CD4-positive, alpha-beta memory T cell (primary cell): ENCODE measurements at regions of chr7 and their contacts with region 1.

Region 1: DNA sequence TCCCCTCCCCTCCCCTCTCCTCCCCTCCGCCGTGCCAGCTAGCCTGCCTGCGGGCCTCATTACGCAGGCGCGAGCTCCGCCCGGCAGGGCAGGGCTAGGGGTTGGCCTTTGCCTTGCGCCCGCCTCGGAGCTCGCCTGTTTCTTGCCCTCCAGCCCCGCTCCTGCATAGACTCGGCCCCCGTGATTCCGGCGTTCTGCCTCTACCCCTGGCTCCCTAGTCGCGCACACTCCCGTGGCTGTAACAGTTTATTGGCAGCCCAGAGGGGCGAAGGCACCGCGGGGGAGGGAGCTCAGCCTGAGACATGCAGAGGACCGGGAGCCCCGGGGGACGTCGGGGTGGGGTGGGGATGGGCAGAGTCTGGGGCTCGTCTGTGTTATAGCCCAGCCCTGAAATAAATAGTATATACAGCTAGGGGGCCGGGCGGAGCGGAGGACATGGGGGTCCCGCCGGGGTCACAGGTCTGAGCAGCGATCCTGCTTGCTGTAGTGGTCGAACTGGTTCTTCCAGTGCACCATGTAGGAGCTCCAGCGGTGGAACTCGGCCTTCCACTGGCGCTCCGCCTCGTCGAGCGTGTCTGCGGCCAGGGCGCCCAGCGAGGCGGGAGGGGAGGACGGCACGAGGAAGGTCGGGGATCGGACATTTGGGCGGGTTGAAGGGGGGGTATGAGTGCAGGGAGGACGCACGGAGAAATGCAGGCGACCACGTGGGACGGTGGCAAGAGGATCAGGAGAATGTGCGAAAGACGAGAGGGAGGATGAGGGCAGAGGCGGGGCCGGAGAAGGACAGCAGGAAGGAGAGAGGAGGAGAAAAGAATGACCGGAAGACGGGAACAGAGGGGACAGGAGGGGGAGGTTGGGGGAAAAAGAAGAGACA is 483 bp upstream of the UFSP1 start:
- DNase-seq: peak; percentile 90 to 93 (median 91)
- H3K4me3 ChIP-seq: peak overlapping the region; percentile 61 to 70
- H3K4me3 Mint-ChIP-seq: peak overlapping the region; percentile 84 to 95 (median 88)
- H3K27ac ChIP-seq: peak overlapping the region; percentile 39
- H3K27ac Mint-ChIP-seq: peak overlapping the region in 6 of 7 donors; percentile 22 to 93 (median 78)
- H3K4me1 ChIP-seq: peaks cover 50% of the 10 kb centered on the region
- H3K4me1 Mint-ChIP-seq: peaks cover 28 to 64% (median 40%) of the 10 kb centered on the region in 4 donors
- H3K27me3 ChIP-seq: peaks cover 2% of the 10 kb centered on the region
- H3K27me3 Mint-ChIP-seq: peaks cover 12 to 18% of the 10 kb centered on the region in 2 donors

Region 2: GRCh38 chr7:100837099-100837836 is 52.7 kb before region 1 on chr7:
- CTCF ChIA-PET with region 1: no interaction called
- POLR2A ChIA-PET with region 1: interaction called, 3 read pairs
- intact Hi-C with region 1: loop called (anchors 5 kb)
- DNase-seq: peak; percentile 57 to 71 (median 65)
- H3K4me3 ChIP-seq: peak overlapping the region in 1 of 2 donors; percentile 51
- H3K4me3 Mint-ChIP-seq: peak overlapping the region; percentile 75 to 90 (median 85)
- H3K27ac ChIP-seq: peak overlapping the region; percentile 37
- H3K27ac Mint-ChIP-seq: peak overlapping the region; percentile 64 to 92 (median 88)
- H3K4me1 ChIP-seq: peaks cover 9% of the 10 kb centered on the region
- H3K4me1 Mint-ChIP-seq: peaks cover 2 to 21% (median 7%) of the 10 kb centered on the region in 4 donors
- H3K27me3 ChIP-seq: no peaks in the 10 kb centered on the region
- H3K27me3 Mint-ChIP-seq: peaks cover 0 to 2% of the 10 kb centered on the region in 2 donors

Region 3: DNA sequence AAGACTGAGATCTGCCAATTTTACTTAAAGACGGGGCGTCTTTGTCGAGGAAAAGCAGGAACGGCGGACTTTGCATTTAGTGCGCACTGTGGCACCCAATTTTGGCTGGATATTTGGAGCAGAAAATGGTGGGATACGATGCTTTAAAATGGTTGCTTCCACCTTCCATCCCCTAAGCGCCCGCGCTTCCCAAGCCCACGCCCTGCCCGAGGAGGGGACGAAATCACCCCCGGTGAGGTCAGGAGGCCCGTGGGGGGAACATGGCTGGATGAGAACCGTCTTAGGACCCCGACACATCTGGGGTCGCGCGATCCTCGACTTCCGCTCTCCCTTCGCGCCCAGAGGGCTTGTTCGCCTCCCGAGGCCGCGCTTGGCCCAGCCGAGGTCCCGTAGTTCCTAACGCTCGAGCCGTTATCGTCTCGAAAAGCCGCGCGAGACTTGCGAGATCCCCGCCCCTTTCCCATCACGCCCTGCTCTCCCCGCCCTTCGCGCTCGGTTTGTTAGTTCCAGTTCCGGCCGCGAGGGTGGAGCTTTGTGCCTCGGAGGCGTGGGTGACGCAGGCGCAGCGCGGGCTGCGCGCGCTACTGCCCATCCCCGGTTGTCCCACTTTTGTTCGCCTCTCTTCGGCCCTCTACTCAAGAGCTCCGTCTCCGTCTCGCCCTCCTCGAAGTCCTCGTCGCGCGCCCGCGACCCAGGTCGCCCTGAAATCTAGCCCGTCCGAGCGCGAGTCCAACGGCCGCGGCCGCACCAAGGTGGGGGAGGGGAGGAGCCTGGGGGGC is 15.2 kb before region 1 on chr7 and contains the start of gene SRRT:
- CTCF ChIA-PET with region 1: interaction called, 6 read pairs
- POLR2A ChIA-PET with region 1: interaction called, 243 read pairs
- intact Hi-C with region 1: loop called (anchors 1 kb)
- DNase-seq: peak; percentile 98
- H3K4me3 ChIP-seq: peak within 1 kb of the TSS; percentile 92 to 99
- H3K4me3 Mint-ChIP-seq: peak within 1 kb of the TSS; percentile 98 to 99 (median 99)
- H3K27ac ChIP-seq: peak within 1 kb of the TSS; percentile 91
- H3K27ac Mint-ChIP-seq: peak within 1 kb of the TSS; percentile 96 to 99 (median 98)
- H3K4me1 ChIP-seq: peaks cover 49% of the 10 kb centered on the region
- H3K4me1 Mint-ChIP-seq: peaks cover 26 to 61% (median 47%) of the 10 kb centered on the region in 4 donors
- H3K27me3 ChIP-seq: no peaks in the 10 kb centered on the region
- H3K27me3 Mint-ChIP-seq: no peaks in the 10 kb centered on the region
- total RNA-seq, gene SRRT: 264 to 272 TPM

Region 4: DNA sequence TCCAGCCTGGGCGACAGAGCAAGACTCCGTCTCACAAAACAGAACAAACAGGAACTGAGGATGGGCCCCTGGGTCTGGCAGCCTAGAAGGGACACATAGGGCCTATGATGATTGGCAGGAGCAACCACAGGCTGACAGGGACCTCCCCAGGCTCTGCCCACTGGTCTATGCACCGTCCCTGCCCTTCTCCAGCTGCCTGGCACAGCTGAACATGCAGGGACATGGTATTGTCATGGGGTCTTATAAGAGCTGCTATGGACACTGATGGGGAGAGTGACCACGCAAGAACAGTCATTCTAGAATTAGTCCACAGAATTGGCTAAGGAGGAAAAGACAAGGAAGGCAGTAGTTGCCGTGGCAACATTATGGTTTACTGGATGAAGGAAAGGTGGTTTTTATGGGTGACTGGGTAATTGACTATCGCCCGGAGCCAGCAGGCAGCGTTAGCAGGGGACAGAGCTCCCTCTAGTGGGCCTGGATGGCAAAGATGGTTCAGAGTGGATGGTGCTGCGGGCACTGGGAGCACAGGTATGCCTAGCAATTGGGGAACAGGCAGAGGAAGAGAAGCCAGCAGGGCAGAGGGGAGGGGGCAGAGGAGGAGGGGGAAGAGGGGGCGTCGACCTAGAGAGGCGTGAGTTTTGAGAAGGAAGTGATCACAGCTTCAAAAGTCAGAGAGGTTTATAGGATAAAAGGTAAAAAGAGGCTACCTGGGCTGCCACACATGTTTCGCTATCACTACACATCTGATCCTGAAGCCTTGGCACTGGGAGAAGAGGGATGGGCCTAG is 187.5 kb after region 1 on chr7:
- CTCF ChIA-PET with region 1: interaction called, 11 read pairs
- POLR2A ChIA-PET with region 1: interaction called, 3 read pairs
- intact Hi-C with region 1: no loop called
- DNase-seq: peak; percentile 75 to 81 (median 78)
- H3K4me3 ChIP-seq: no peak overlapping the region
- H3K4me3 Mint-ChIP-seq: peak overlapping the region in 2 of 8 donors; percentile 8 to 41
- H3K27ac ChIP-seq: no peak overlapping the region
- H3K27ac Mint-ChIP-seq: peak overlapping the region in 1 of 7 donors; percentile 70
- H3K4me1 ChIP-seq: peaks cover 7% of the 10 kb centered on the region
- H3K4me1 Mint-ChIP-seq: peaks cover 0 to 5% (median 4%) of the 10 kb centered on the region in 4 donors
- H3K27me3 ChIP-seq: no peaks in the 10 kb centered on the region
- H3K27me3 Mint-ChIP-seq: peaks cover 5 to 9% of the 10 kb centered on the region in 2 donors

Region 5: DNA sequence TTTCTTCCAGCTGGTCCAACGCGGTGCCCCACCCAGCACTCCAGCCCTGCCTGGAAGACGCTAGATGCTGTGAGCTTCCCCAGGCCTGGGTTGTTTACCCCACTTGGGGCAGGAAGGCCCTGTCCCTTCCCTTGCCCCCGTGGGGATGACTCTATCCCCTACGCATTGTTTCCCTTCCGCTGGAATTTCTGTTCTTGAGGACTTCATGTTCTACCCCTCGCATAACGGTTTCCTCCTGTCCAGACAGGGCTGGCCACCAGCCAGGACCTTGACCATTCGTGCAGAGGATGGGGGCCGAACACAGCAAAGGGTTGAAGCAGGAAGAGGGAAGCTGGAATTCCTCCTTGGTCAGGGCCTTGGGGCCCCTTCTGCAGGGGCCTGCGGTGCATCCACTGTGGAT is 222.2 kb after region 1 on chr7:
- CTCF ChIA-PET with region 1: no interaction called
- POLR2A ChIA-PET with region 1: no interaction called
- intact Hi-C with region 1: no loop called
- DNase-seq: no peak
- H3K4me3 ChIP-seq: no peak overlapping the region
- H3K4me3 Mint-ChIP-seq: no peak overlapping the region
- H3K27ac ChIP-seq: no peak overlapping the region
- H3K27ac Mint-ChIP-seq: no peak overlapping the region
- H3K4me1 ChIP-seq: no peaks in the 10 kb centered on the region
- H3K4me1 Mint-ChIP-seq: no peaks in the 10 kb centered on the region
- H3K27me3 ChIP-seq: no peaks in the 10 kb centered on the region
- H3K27me3 Mint-ChIP-seq: peaks cover 9 to 10% of the 10 kb centered on the region in 2 donors

Region 6: GRCh38 chr7:101165075-101165957 is 275.3 kb after region 1 on chr7 and contains the start of gene VGF:
- CTCF ChIA-PET with region 1: no interaction called
- POLR2A ChIA-PET with region 1: interaction called, 3 read pairs
- intact Hi-C with region 1: loop called (anchors 5 kb)
- DNase-seq: peak; percentile 89 to 92 (median 90)
- H3K4me3 ChIP-seq: peak within 1 kb of the TSS in 1 of 2 donors; percentile 23
- H3K4me3 Mint-ChIP-seq: peak within 1 kb of the TSS; percentile 63 to 87 (median 78)
- H3K27ac ChIP-seq: no peak within 1 kb of the TSS
- H3K27ac Mint-ChIP-seq: peak within 1 kb of the TSS; percentile 74 to 93 (median 88)
- H3K4me1 ChIP-seq: peaks cover 53% of the 10 kb centered on the region
- H3K4me1 Mint-ChIP-seq: peaks cover 20 to 48% (median 35%) of the 10 kb centered on the region in 4 donors
- H3K27me3 ChIP-seq: peaks cover 62% of the 10 kb centered on the region
- H3K27me3 Mint-ChIP-seq: peaks cover 46 to 47% of the 10 kb centered on the region in 2 donors
- total RNA-seq, gene VGF: not detected

Region 7: DNA sequence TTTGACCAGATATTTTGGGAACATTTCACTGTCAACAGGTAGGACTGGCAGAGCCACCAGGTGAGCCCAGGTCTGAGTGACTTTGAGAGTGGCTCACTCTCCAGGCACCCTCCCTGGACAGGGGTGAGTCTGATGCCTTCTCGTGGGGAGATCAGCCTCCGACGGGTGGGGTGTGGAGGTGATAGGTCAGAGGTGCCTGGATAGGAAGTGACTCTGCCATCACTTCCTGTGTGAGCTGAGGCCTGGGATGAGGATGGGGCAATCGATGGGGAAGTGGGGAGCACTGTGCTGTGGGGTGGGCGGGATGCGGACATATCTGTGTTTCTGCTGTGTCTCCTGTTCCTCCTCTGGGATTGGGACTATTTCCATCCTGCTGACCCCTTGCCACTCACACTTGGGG is 397.0 kb after region 1 on chr7:
- CTCF ChIA-PET with region 1: no interaction called
- POLR2A ChIA-PET with region 1: no interaction called
- intact Hi-C with region 1: loop called (anchors 10 kb)
- DNase-seq: no peak
- H3K4me3 ChIP-seq: no peak overlapping the region
- H3K4me3 Mint-ChIP-seq: no peak overlapping the region
- H3K27ac ChIP-seq: no peak overlapping the region
- H3K27ac Mint-ChIP-seq: peak overlapping the region in 1 of 7 donors; percentile 83
- H3K4me1 ChIP-seq: peaks cover 9% of the 10 kb centered on the region
- H3K4me1 Mint-ChIP-seq: peaks cover 8 to 25% (median 19%) of the 10 kb centered on the region in 4 donors
- H3K27me3 ChIP-seq: no peaks in the 10 kb centered on the region
- H3K27me3 Mint-ChIP-seq: peaks cover 6 to 9% of the 10 kb centered on the region in 2 donors